ENCODE measurements at regions of chr1 and their contacts with region 1.

Region 1: GRCh38 chr1:8302081-8302956 is 15.6 kb upstream of the SLC45A1 start:
- DNase-seq: peak; percentile 74
- ATAC-seq: peak; percentile 72
- H3K4me3 ChIP-seq: peak overlapping the region in 1 of 2 experiments; percentile 8; a peak in 2 of 4 replicates
- H3K27ac ChIP-seq: peak overlapping the region; percentile 94
- H3K4me1 ChIP-seq: peaks cover 30% of the 10 kb centered on the region
- H3K27me3 ChIP-seq: no peaks in the 10 kb centered on the region
- CTCF ChIP-seq: no peak

Region 2: DNA sequence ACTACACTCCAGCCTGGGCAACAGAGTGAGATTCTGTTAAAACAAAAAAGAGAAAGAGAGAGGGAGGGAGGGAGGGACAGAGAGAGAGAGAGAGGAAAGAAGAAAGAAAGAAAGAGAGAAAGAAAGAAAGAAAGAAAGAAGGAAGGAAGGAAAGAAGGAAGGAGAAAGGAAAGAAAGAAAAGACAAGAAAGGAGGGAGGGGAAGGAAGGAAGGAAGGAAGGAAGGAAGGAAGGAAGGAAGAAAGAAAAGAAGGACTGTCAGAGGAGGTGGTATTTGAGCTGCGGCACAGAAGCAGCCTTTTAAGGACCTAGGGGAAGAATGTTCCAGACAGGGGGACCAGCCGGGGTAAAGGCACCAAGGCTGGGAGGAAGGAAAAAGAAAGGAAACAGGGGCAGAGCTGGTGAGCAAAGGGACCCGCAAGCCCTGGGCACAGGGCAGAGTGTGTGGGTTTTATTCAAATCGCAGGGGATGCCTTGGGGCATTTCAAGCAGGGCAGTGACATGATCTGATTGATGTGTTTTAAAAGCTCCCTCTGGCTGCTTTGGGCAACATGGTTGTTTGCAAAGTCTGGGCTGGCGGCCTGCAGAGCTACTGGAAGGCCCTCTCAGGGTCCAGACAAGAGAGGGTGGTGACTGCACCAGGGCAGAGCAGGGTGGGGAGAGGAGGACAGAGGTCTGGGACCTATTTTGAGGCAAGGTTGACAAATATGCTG is 708.2 kb before region 1 on chr1:
- CTCF ChIA-PET with region 1: no interaction called
- POLR2A ChIA-PET with region 1: no interaction called
- in situ Hi-C with region 1: no loop called
- intact Hi-C with region 1: no loop called
- DNase-seq: no peak
- ATAC-seq: peak; percentile 46
- H3K4me3 ChIP-seq: no peak overlapping the region
- H3K27ac ChIP-seq: no peak overlapping the region
- H3K4me1 ChIP-seq: no peaks in the 10 kb centered on the region
- H3K27me3 ChIP-seq: no peaks in the 10 kb centered on the region
- CTCF ChIP-seq: no peak

Region 3: GRCh38 chr1:8040586-8040985 is 261.7 kb before region 1 on chr1:
- CTCF ChIA-PET with region 1: interaction called, 13 read pairs
- POLR2A ChIA-PET with region 1: no interaction called
- in situ Hi-C with region 1: no loop called
- intact Hi-C with region 1: no loop called
- DNase-seq: peak; percentile 95
- ATAC-seq: peak; percentile 97
- H3K4me3 ChIP-seq: no peak overlapping the region
- H3K27ac ChIP-seq: peak overlapping the region; percentile 92
- H3K4me1 ChIP-seq: peaks cover 13% of the 10 kb centered on the region
- H3K27me3 ChIP-seq: no peaks in the 10 kb centered on the region
- CTCF ChIP-seq: no peak

Region 4: GRCh38 chr1:8211589-8212442 is 90.5 kb before region 1 on chr1:
- CTCF ChIA-PET with region 1: no interaction called
- POLR2A ChIA-PET with region 1: no interaction called
- in situ Hi-C with region 1: no loop called
- intact Hi-C with region 1: loop called (anchors 5 kb)
- DNase-seq: peak; percentile 97
- ATAC-seq: peak; percentile 88
- H3K4me3 ChIP-seq: no peak overlapping the region
- H3K27ac ChIP-seq: peak overlapping the region; percentile 99
- H3K4me1 ChIP-seq: peaks cover 44% of the 10 kb centered on the region
- H3K27me3 ChIP-seq: no peaks in the 10 kb centered on the region
- CTCF ChIP-seq: no peak

Measured in Panc1 (cell line).